ENCODE measurements at regions of chr10 and their contacts with region 1.

Region 1: GRCh38 chr10:104268716-104269645 is at the start of gene GSTO2:
- DNase-seq: peak; percentile 96 to 99
- ATAC-seq: peak; percentile 90 to 98 (median 93)
- H3K4me3 ChIP-seq: peak within 1 kb of the TSS; percentile 74
- H3K4me3 Mint-ChIP-seq: peak within 1 kb of the TSS; percentile 90
- H3K27ac ChIP-seq: peak within 1 kb of the TSS; percentile 80
- H3K27ac Mint-ChIP-seq: peak within 1 kb of the TSS; percentile 94 to 97
- H3K4me1 ChIP-seq: peaks cover 19% of the 10 kb centered on the region
- H3K4me1 Mint-ChIP-seq: peaks cover 28 to 31% of the 10 kb centered on the region in 2 donors
- H3K27me3 ChIP-seq: peaks cover under 1% of the 10 kb centered on the region
- H3K27me3 Mint-ChIP-seq: peaks cover 0 to 2% of the 10 kb centered on the region in 2 donors
- CTCF ChIP-seq: no peak
- total RNA-seq, gene GSTO2: 0.75 to 1.4 (median 0.84) TPM

Region 2: DNA sequence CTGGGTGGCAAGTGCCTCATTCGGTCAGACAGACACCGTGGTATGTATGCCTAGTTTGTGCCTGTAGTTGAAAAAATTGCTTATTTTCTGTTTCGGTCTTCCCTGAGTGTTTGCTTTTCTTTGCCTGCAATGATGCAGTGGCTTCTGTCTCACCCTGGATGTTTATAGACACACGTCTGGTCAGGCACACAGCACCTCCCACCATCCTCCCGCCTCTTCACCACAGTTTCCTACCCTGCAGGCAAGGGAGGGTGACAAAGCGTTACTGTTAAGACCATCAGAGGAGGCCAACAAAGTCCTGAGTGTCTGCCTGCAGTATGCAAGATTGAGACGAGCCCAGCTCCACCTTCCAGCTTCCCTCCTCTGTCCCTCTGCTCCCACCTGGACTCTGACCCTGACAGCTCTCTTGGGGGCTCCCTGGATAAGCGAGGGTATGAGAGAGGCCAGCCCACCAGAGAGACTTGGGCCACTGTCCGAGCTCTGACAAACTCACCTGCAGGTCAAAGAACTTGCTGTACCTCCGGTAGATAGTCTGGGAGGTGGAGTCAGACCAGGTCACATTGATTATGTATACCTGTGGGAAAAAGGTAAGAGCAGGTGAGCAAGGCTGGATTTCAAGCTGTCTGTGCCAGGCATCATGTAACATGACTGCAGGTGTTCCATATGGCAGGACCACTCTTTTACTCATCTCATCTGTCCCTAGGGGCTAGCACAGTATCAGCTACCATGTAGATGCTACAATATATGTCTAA is 468.0 kb before region 1 on chr10:
- intact Hi-C with region 1: loop called (anchors 10 kb)
- DNase-seq: peak; percentile 61 to 67
- ATAC-seq: peak; percentile 94 to 99 (median 94)
- H3K4me3 ChIP-seq: no peak overlapping the region
- H3K4me3 Mint-ChIP-seq: peak overlapping the region; percentile 79
- H3K27ac ChIP-seq: peak overlapping the region; percentile 75
- H3K27ac Mint-ChIP-seq: peak overlapping the region; percentile 86 to 89
- H3K4me1 ChIP-seq: peaks cover 20% of the 10 kb centered on the region
- H3K4me1 Mint-ChIP-seq: peaks cover 27 to 32% of the 10 kb centered on the region in 2 donors
- H3K27me3 ChIP-seq: no peaks in the 10 kb centered on the region
- H3K27me3 Mint-ChIP-seq: peaks cover 0 to 4% of the 10 kb centered on the region in 2 donors
- CTCF ChIP-seq: no peak

Region 3: GRCh38 chr10:104121520-104122224 is 147.3 kb before region 1 on chr10 and contains the start of gene SFR1:
- intact Hi-C with region 1: loop called (anchors 5 kb)
- DNase-seq: peak; percentile 99
- ATAC-seq: peak; percentile 85 to 97 (median 90)
- H3K4me3 ChIP-seq: peak within 1 kb of the TSS; percentile 96
- H3K4me3 Mint-ChIP-seq: peak within 1 kb of the TSS; percentile 93
- H3K27ac ChIP-seq: peak within 1 kb of the TSS; percentile 97
- H3K27ac Mint-ChIP-seq: peak within 1 kb of the TSS; percentile 98 to 99
- H3K4me1 ChIP-seq: no peaks in the 10 kb centered on the region
- H3K4me1 Mint-ChIP-seq: peaks cover 14% of the 10 kb centered on the region in 2 donors
- H3K27me3 ChIP-seq: no peaks in the 10 kb centered on the region
- H3K27me3 Mint-ChIP-seq: peaks cover 0 to 9% of the 10 kb centered on the region in 2 donors
- CTCF ChIP-seq: peak; percentile 51
- total RNA-seq, gene SFR1: 9.1 to 19.1 (median 18.3) TPM

Region 4: DNA sequence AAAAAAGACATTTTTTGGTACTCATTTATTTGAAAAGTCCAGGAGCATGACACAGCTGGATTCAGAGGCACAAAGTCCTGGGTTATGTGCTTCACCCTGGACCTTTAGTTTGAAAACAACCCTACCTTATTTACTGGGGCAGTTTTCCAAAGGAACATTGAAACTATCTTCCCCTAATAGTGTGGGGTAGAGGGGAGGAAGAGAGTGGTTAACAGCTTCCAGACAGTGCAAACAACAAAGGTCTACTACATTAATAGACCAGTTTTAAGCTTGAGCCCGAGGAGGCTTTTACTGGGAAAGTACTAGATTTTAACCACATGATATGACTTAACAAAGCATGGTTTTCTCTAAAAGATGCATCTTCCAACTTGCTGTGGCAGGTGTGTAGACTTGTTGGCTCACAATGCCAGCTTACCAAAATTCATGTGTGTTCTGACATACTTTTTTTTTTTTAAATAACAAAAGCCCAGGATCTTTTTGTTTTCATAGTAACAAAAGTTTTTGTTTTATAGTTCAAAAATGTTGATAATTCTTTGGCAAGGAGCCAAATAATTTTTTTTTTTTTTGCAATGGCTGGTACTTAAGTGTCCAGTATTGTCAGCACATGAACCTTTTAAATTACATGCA is 12.5 kb before region 1 on chr10:
- intact Hi-C with region 1: loop called (anchors 1 kb)
- DNase-seq: peak in 1 of 2 donors; percentile 67
- ATAC-seq: peak; percentile 55 to 82 (median 66)
- H3K4me3 ChIP-seq: no peak overlapping the region
- H3K4me3 Mint-ChIP-seq: peak overlapping the region; percentile 97
- H3K27ac ChIP-seq: peak overlapping the region; percentile 60
- H3K27ac Mint-ChIP-seq: peak overlapping the region; percentile 90 to 96
- H3K4me1 ChIP-seq: peaks cover 12% of the 10 kb centered on the region
- H3K4me1 Mint-ChIP-seq: peaks cover 70% of the 10 kb centered on the region in 2 donors
- H3K27me3 ChIP-seq: no peaks in the 10 kb centered on the region
- H3K27me3 Mint-ChIP-seq: peaks cover 0 to 3% of the 10 kb centered on the region in 2 donors
- CTCF ChIP-seq: no peak

Region 5: DNA sequence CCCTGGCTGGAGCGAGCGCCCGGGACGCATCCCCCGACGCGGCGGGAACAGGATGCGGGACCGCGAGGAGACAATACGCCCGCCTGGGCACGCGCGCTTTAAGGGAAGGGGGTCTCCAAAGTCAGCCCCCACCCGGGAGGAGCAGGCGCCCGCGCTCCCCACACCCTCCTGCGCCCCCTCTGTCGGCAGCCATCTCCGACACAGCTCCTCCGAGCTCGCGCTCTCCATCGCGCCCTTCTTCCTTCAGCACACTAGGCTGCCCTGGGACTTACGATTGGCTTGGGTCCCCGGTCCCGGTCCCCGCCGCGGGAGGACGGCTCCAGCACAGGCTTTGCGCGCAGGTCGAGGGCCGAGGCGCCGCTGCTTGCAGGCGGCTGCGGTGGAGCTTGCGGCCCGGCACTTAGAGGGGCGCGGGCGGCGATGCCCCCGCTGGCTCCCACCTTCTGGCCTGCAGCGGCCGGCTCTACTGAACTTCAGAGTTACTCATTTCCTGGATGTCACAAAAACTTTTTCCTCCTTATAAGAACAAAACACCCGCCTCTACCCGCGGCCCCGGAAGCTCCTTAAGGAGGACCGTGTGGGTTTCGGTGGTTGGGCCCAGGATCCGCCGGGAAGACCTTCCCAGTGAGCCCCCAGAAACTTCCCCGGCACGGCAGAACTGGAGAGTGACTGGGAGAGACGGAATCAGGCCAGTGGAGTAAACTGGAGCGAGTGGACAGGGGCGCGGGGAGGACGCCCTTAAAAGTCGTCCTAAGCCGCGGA is 69.2 kb after region 1 on chr10 and contains the start of gene ITPRIP:
- intact Hi-C with region 1: loop called (anchors 2 kb)
- DNase-seq: peak; percentile 77 to 85
- ATAC-seq: peak; percentile 65 to 86 (median 84)
- H3K4me3 ChIP-seq: peak within 1 kb of the TSS; percentile 61
- H3K4me3 Mint-ChIP-seq: peak within 1 kb of the TSS; percentile 100
- H3K27ac ChIP-seq: peak within 1 kb of the TSS; percentile 95
- H3K27ac Mint-ChIP-seq: peak within 1 kb of the TSS; percentile 98 to 100
- H3K4me1 ChIP-seq: peaks cover 45% of the 10 kb centered on the region
- H3K4me1 Mint-ChIP-seq: peaks cover 50 to 58% of the 10 kb centered on the region in 2 donors
- H3K27me3 ChIP-seq: no peaks in the 10 kb centered on the region
- H3K27me3 Mint-ChIP-seq: peaks cover 0 to 4% of the 10 kb centered on the region in 2 donors
- CTCF ChIP-seq: no peak
- total RNA-seq, gene ITPRIP: 172 to 225 (median 176) TPM